ENCODE measurements at regions of chr22 and their contacts with region 1.

Region 1: DNA sequence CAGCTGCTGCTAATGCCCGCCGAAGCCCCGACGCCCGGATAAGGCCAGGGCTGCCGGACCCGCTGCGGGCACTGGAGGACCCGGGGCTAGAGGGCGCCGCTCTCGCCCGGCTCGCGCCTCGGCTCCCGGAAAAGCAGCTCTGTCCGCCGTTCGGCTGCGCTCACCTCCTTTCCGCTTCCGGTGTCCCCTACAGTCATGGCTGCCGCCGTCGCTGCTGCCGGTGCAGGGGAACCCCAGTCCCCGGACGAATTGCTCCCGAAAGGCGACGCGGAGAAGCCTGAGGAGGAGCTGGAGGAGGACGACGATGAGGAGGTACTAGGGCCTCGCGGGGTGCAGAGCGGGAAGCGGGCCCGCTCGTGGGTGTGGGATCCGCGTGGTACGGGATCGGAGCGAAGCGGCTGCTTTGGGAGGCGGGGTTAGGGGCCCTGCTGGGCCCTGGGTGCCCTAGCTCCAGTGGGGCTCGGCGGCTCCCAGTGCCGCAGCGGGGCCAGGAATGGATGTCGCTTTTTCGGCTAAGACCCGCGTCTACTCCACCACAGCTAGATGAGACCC is at the start of gene TOMM22:
- DNase-seq: peak; percentile 87
- ATAC-seq: peak; percentile 96
- H3K4me3 Mint-ChIP-seq: peak within 1 kb of the TSS; percentile 100
- H3K27ac Mint-ChIP-seq: peak within 1 kb of the TSS; percentile 98
- H3K4me1 Mint-ChIP-seq: peaks cover 20% of the 10 kb centered on the region
- H3K27me3 Mint-ChIP-seq: no peaks in the 10 kb centered on the region
- total RNA-seq, gene TOMM22: 58.7 to 60.4 TPM

Region 2: GRCh38 chr22:38694945-38695344 is 13.1 kb after region 1 on chr22:
- POLR2A ChIA-PET with region 1: interaction called, 33 read pairs
- DNase-seq: no peak
- ATAC-seq: no peak
- H3K4me3 Mint-ChIP-seq: no peak overlapping the region
- H3K27ac Mint-ChIP-seq: peak overlapping the region; percentile 60
- H3K4me1 Mint-ChIP-seq: peaks cover 51% of the 10 kb centered on the region
- H3K27me3 Mint-ChIP-seq: no peaks in the 10 kb centered on the region

Region 3: GRCh38 chr22:38700270-38700788 is 18.5 kb after region 1 on chr22:
- POLR2A ChIA-PET with region 1: interaction called, 33 read pairs
- DNase-seq: no peak
- ATAC-seq: peak; percentile 8
- H3K4me3 Mint-ChIP-seq: peak overlapping the region; percentile 94
- H3K27ac Mint-ChIP-seq: peak overlapping the region; percentile 98
- H3K4me1 Mint-ChIP-seq: peaks cover 52% of the 10 kb centered on the region
- H3K27me3 Mint-ChIP-seq: no peaks in the 10 kb centered on the region

Region 4: DNA sequence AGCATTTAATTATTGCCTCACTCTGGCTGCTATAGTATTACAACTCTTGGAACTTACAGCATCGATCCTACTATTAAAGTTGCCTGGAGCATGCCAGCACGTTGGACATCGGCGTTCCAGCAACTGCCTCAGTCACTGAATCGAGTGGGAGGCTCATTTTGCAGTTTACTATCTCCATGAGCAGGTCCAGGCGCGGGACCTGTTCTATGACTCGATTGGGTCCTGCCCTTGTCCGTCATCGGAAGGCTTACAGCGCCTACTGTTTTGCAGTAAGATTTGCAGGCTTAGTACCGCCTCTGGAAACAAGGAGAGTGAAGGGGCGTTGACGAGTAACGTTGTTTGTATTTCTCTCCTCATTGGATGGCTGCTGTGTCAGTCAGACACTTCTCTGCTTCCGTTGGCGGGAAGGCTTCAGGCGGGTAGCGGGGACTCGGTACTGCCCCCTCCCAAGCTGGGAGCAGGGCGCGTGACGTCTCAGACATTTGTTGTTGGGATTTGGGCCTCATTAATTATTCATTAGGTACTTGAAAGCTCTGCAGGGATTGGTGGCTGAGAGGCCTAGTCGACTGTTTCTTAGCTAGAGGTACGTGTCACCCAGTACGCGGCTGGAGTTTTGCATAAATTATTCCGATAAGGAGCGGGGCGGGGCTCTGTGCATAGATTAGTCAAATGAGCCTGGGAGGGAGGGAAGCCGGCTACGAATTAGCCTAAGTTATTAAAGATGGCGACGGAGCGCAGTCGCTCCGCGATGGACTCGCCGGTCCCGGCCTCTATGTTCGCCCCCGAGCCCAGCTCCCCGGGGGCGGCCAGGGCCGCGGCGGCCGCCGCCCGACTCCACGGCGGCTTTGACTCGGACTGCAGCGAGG is 23.6 kb after region 1 on chr22 and contains the start of gene GTPBP1:
- POLR2A ChIA-PET with region 1: interaction called, 33 read pairs
- DNase-seq: peak; percentile 85
- ATAC-seq: peak; percentile 83
- H3K4me3 Mint-ChIP-seq: peak within 1 kb of the TSS; percentile 94
- H3K27ac Mint-ChIP-seq: peak within 1 kb of the TSS; percentile 95
- H3K4me1 Mint-ChIP-seq: peaks cover 43% of the 10 kb centered on the region
- H3K27me3 Mint-ChIP-seq: no peaks in the 10 kb centered on the region
- total RNA-seq, gene GTPBP1: 98.6 TPM